ENCODE measurements at regions of chr10 and their contacts with region 1.

Region 1: DNA sequence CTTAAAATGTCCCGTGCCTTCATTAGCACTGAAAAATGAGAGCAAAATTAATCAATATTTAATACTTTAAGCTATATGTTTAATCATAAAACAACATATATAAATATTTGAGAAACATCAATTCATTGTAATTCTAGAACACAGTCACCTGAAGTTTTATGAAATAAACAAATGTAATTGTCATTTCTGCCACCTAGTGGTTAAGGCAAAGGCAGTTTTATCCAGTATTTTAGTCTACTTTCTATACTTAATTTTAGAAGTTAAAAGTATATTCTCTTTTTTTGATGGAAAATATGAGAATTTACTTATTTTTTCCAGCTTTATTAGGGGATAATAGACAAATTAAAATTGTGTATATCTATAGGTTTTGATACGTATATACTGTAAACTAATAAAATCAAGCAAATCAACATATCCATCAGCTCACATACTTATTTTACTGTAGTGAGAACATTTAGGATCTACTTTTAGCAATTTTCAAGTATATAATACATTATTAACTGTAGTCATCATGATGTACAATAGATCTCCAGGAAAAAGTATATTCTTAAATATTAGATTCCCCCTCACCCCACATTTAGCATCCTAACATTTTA is 16.9 kb downstream of the PCGF6 start:
- DNase-seq: no peak
- H3K4me3 ChIP-seq: no peak overlapping the region
- H3K27ac ChIP-seq: no peak overlapping the region
- H3K4me1 ChIP-seq: no peaks in the 10 kb centered on the region
- H3K27me3 ChIP-seq: no peaks in the 10 kb centered on the region
- CTCF ChIP-seq: peak; percentile 57 to 70

Region 2: DNA sequence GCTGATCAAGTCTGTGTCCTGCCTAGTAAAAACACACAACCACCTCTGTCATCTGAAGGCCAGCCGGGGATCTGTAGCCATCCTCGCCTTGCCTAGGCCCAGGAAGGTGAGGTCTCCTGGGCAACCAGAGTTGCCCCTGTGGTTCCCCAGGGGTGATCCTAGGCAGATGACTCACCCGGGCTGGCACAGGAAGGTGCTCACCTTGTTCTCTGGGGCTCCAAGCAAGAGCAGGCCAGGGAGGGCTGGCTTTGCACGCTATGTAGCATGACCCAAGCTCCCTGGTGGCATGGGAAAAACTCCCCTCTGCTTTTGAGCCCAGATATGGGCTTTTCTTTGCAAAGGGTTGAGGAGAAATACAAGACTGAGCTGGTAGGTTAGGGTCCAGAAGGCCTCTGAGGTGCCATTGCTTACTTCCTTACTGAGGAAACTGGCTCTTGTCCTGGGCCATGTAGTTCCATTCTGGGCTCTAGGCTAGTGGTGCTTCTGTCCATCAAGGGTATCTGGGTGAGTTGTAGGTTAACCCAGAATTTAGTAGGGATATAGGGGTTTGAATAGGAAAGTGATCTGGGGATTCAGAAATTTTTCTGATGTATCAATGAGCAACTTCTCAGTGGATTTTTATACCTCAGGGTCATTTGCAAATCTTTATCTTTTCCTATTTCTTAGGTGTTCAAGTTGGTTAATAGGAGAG is 253.0 kb before region 1 on chr10:
- CTCF ChIA-PET with region 1: no interaction called
- dilution Hi-C with region 1: no loop called
- in situ Hi-C with region 1: no loop called
- intact Hi-C with region 1: loop called (anchors 10 kb)
- DNase-seq: peak; percentile 44
- H3K4me3 ChIP-seq: no peak overlapping the region
- H3K27ac ChIP-seq: no peak overlapping the region
- H3K4me1 ChIP-seq: peaks cover 7% of the 10 kb centered on the region
- H3K27me3 ChIP-seq: no peaks in the 10 kb centered on the region
- CTCF ChIP-seq: no peak

Measured in mammary epithelial cell (primary cell).